Vagina (tissue), 2 donors: ENCODE measurements at regions of chr1 and their contacts with region 1.

Region 1: GRCh38 chr1:113140588-113141446 is 67.8 kb downstream of the LRIG2 start:
- DNase-seq: no peak
- H3K4me3 ChIP-seq: no peak overlapping the region
- H3K27ac ChIP-seq: no peak overlapping the region
- H3K4me1 ChIP-seq: peaks cover 28% of the 10 kb centered on the region
- H3K27me3 ChIP-seq: no peaks in the 10 kb centered on the region
- CTCF ChIP-seq: peak; percentile 54 to 74 (median 72)
- POLR2A ChIP-seq: no peak

Region 2: GRCh38 chr1:113684153-113684541 is 543.3 kb after region 1 on chr1:
- intact Hi-C with region 1: loop called (anchors 5 kb)
- DNase-seq: no peak
- H3K4me3 ChIP-seq: no peak overlapping the region
- H3K27ac ChIP-seq: peak overlapping the region; percentile 53
- H3K4me1 ChIP-seq: peaks cover 6% of the 10 kb centered on the region
- H3K27me3 ChIP-seq: no peaks in the 10 kb centered on the region
- CTCF ChIP-seq: no peak
- POLR2A ChIP-seq: no peak